ENCODE measurements at regions of chr6 and their contacts with region 1.

Region 1: DNA sequence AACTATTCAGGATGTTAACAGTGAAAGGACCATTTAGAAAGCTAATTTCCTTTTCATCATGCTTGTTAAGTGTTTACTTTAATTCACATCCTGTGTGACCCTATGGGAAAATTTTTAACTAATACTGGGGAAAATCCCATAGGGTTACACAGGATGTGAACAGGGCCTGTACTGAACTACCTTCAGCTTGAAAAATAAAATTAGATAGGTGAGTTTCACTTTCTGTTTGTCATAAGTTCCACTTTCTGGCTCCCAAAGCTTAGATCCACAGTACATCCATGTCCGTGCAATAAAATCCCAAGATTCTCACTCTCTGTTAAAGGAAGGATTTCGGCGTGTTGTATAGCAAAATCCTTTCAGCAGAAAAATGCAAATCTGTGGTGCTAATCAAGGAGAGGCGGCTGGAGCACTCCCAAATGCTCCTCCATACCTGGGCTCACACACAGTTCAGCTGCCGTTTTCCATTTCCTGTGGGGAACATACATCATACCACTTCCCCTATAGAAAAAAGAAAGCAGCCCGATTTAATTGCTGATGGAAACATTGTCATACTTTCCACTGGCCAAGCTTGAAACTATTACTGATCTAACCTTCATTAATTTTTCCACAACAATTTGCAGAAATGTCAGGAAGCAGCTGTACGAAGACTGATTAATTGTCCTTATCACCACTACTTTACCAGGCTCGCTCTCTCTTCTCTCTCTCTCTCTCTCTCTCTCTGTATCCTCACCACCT is 125.2 kb downstream of the HIVEP2 start:
- DNase-seq: peak; percentile 90
- ATAC-seq: peak; percentile 67
- H3K4me3 ChIP-seq: peak overlapping the region; percentile 39; the same call in 1 of the 2 replicates
- H3K27ac ChIP-seq: peak overlapping the region; percentile 88
- H3K4me1 ChIP-seq: peaks cover 40% of the 10 kb centered on the region
- H3K27me3 ChIP-seq: no peaks in the 10 kb centered on the region
- CTCF ChIP-seq: no peak
- EP300 ChIP-seq: peak; percentile 51 to 97
- POLR2A ChIP-seq: no peak
- RAD21 ChIP-seq: 0 out of 2 replicates have a peak, but pooled peaks have one; percentile 4

Region 2: GRCh38 chr6:142702501-142703460 is 117.0 kb before region 1 on chr6:
- CTCF ChIA-PET with region 1: no interaction called
- POLR2A ChIA-PET with region 1: no interaction called
- RAD21 ChIA-PET with region 1: interaction called, 6 read pairs
- SMC1A ChIA-PET with region 1: interaction called, 12 read pairs
- in situ Hi-C with region 1: no loop called
- intact Hi-C with region 1: no loop called
- DNase-seq: no peak
- ATAC-seq: peak; percentile 53
- H3K4me3 ChIP-seq: no peak overlapping the region
- H3K27ac ChIP-seq: no peak overlapping the region; the same call in 1 of the 2 replicates
- H3K4me1 ChIP-seq: peaks cover 14% of the 10 kb centered on the region
- H3K27me3 ChIP-seq: no peaks in the 10 kb centered on the region
- CTCF ChIP-seq: no peak
- EP300 ChIP-seq: no peak
- POLR2A ChIP-seq: no peak
- RAD21 ChIP-seq: no peak

Region 3: GRCh38 chr6:142790257-142790656 is 29.5 kb before region 1 on chr6:
- CTCF ChIA-PET with region 1: interaction called, 9 read pairs
- POLR2A ChIA-PET with region 1: interaction called, 6 read pairs
- RAD21 ChIA-PET with region 1: interaction called, 33 read pairs
- SMC1A ChIA-PET with region 1: interaction called, 39 read pairs
- in situ Hi-C with region 1: no loop called
- intact Hi-C with region 1: loop called (anchors 2 kb)
- DNase-seq: no peak
- ATAC-seq: no peak
- H3K4me3 ChIP-seq: no peak overlapping the region
- H3K27ac ChIP-seq: no peak overlapping the region
- H3K4me1 ChIP-seq: no peaks in the 10 kb centered on the region
- H3K27me3 ChIP-seq: no peaks in the 10 kb centered on the region
- CTCF ChIP-seq: no peak
- EP300 ChIP-seq: no peak
- POLR2A ChIP-seq: no peak
- RAD21 ChIP-seq: no peak

Region 4: GRCh38 chr6:142833054-142833453 is 13.3 kb after region 1 on chr6:
- CTCF ChIA-PET with region 1: interaction called, 108 read pairs
- POLR2A ChIA-PET with region 1: interaction called, 53 read pairs
- RAD21 ChIA-PET with region 1: interaction called, 374 read pairs
- SMC1A ChIA-PET with region 1: interaction called, 449 read pairs
- in situ Hi-C with region 1: no loop called
- intact Hi-C with region 1: no loop called
- DNase-seq: no peak
- ATAC-seq: peak; percentile 50
- H3K4me3 ChIP-seq: no peak overlapping the region
- H3K27ac ChIP-seq: no peak overlapping the region
- H3K4me1 ChIP-seq: 0 out of 2 replicates have a peak, but pooled peaks cover 2% of the 10 kb centered on the region
- H3K27me3 ChIP-seq: no peaks in the 10 kb centered on the region
- CTCF ChIP-seq: no peak
- EP300 ChIP-seq: no peak
- POLR2A ChIP-seq: no peak
- RAD21 ChIP-seq: no peak

Region 5: DNA sequence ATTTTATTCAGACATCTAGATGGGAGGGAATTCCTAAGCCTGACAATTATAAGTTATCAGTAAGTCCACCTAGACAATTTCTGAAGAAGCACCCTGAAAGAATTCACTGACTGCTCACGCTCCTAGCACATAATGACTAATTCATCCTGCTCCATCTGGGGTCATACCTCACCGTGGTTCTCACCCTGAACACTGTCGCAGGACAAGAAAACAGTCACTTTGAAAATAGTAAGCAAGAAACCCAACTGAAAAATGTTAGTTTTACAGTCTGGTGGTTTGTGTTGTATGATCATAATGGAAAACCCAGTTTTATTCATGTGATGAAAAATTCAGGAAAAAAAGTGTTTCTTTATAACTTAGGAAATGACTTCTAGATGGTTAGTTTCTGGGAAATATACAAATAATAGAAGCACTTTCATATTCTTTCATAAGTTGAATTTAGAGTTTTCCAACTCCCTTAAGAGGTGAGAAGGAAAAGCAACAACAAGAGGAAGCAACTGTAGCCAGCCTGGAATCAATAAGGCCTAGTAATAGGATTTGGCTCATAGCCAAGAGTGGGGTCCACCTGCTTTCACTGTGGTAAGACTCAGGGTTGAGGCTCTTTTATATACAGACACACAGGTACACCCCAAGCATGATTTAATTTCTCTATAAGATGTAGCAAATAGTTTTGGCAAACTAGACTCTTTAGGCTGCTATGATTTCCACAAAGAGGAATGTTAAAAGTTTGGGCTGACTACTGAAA is 31.1 kb after region 1 on chr6:
- CTCF ChIA-PET with region 1: interaction called, 4 read pairs
- POLR2A ChIA-PET with region 1: interaction called, 67 read pairs
- RAD21 ChIA-PET with region 1: interaction called, 374 read pairs
- SMC1A ChIA-PET with region 1: interaction called, 42 read pairs
- in situ Hi-C with region 1: no loop called
- intact Hi-C with region 1: loop called (anchors 5 kb)
- DNase-seq: peak; percentile 64
- ATAC-seq: peak; percentile 57
- H3K4me3 ChIP-seq: peak overlapping the region; percentile 26; the same call in 1 of the 2 replicates
- H3K27ac ChIP-seq: peak overlapping the region; percentile 98
- H3K4me1 ChIP-seq: peaks cover 95% of the 10 kb centered on the region
- H3K27me3 ChIP-seq: no peaks in the 10 kb centered on the region
- CTCF ChIP-seq: no peak
- EP300 ChIP-seq: peak; percentile 63 to 64; a peak in 3 of 4 replicates
- POLR2A ChIP-seq: 0 out of 2 replicates have a peak, but pooled peaks have one; percentile 37
- RAD21 ChIP-seq: peak; percentile 46

Region 6: GRCh38 chr6:142913511-142914047 is 93.8 kb after region 1 on chr6:
- CTCF ChIA-PET with region 1: interaction called, 3 read pairs
- POLR2A ChIA-PET with region 1: interaction called, 6 read pairs
- RAD21 ChIA-PET with region 1: interaction called, 6 read pairs
- SMC1A ChIA-PET with region 1: interaction called, 8 read pairs
- in situ Hi-C with region 1: no loop called
- intact Hi-C with region 1: loop called (anchors 1 kb)
- DNase-seq: peak; percentile 94
- ATAC-seq: peak; percentile 89
- H3K4me3 ChIP-seq: peak overlapping the region; percentile 27
- H3K27ac ChIP-seq: peak overlapping the region; percentile 95
- H3K4me1 ChIP-seq: peaks cover 32% of the 10 kb centered on the region
- H3K27me3 ChIP-seq: no peaks in the 10 kb centered on the region
- CTCF ChIP-seq: peak; percentile 11 to 27 (median 26); a peak in 3 of 6 replicates
- EP300 ChIP-seq: peak; percentile 72 to 97; a peak in 3 of 4 replicates
- POLR2A ChIP-seq: peak; percentile 43; the same call in 1 of the 2 replicates
- RAD21 ChIP-seq: peak; percentile 53

Region 7: GRCh38 chr6:143015300-143015706 is 195.5 kb after region 1 on chr6:
- CTCF ChIA-PET with region 1: no interaction called
- POLR2A ChIA-PET with region 1: no interaction called
- RAD21 ChIA-PET with region 1: no interaction called
- SMC1A ChIA-PET with region 1: no interaction called
- in situ Hi-C with region 1: no loop called
- intact Hi-C with region 1: no loop called
- DNase-seq: peak; percentile 32
- ATAC-seq: peak; percentile 86
- H3K4me3 ChIP-seq: no peak overlapping the region
- H3K27ac ChIP-seq: no peak overlapping the region
- H3K4me1 ChIP-seq: 0 out of 2 replicates have a peak, but pooled peaks cover 3% of the 10 kb centered on the region
- H3K27me3 ChIP-seq: no peaks in the 10 kb centered on the region
- CTCF ChIP-seq: no peak; a peak in 1 of 6 replicates
- EP300 ChIP-seq: 0 out of 4 replicates have a peak, but pooled peaks of 1 of the 2 experiments have one; percentile 8
- POLR2A ChIP-seq: no peak
- RAD21 ChIP-seq: peak; percentile 17; the same call in 1 of the 2 replicates